ENCODE measurements at regions of chr19 and their contacts with region 1.

Region 1: DNA sequence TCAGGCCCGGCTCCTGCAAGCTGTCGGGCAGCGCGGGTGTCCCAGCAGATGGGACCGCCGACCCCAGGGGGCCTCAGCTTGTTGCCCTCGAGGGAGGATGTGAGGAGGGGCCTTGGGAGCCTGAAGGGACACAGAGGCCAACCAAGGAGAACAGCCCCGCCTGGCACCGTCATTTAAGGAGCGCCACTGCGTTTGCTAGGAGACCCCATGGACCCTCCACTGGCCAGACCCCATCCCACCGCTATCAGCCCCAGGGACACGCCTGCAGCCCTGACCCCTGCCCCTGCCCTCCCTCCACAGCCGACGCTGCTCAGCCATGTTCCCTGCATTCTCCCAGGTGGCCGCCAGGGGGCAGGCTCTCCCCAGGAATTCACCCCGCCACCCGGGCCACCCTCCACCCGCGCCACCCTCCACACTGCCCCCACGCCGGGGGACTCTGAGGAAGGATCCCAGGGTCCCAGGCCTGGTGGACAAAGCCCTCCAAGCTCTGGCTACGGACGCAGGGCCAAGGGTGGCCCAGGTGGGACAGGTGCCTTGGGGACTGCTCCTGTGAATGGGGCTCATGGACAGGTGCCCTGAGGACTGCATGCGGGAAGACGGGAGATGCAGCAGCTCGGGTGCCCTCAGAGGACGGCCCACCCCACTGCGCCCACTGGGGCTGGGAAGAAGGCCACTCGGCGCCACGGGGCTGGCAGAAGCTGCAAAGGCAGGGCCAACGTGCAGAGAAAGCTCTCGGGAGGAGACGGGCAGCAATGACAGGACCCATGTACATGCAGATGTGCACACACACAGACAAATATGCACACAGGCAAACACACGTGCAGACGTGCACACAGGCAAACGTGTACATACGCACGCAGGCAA is 34.4 kb downstream of the PIP5K1C start:
- DNase-seq: peak; percentile 58 to 85 (median 79)
- H3K4me3 ChIP-seq: no peak overlapping the region
- H3K27ac ChIP-seq: no peak overlapping the region
- H3K4me1 ChIP-seq: peaks cover 10% of the 10 kb centered on the region
- H3K27me3 ChIP-seq: no peaks in the 10 kb centered on the region
- CTCF ChIP-seq: peak; percentile 78 to 97 (median 95)
- EP300 ChIP-seq: no peak
- POLR2A ChIP-seq: no peak

Region 2: GRCh38 chr19:3557461-3558248 is 108.3 kb before region 1 on chr19 and contains the start of gene MFSD12:
- intact Hi-C with region 1: no loop called
- DNase-seq: peak; percentile 93 to 96 (median 94)
- H3K4me3 ChIP-seq: peak within 1 kb of the TSS; percentile 86
- H3K27ac ChIP-seq: peak within 1 kb of the TSS in 1 of 2 donors; percentile 45
- H3K4me1 ChIP-seq: peaks cover 10% of the 10 kb centered on the region
- H3K27me3 ChIP-seq: no peaks in the 10 kb centered on the region
- CTCF ChIP-seq: no peak
- EP300 ChIP-seq: no peak
- POLR2A ChIP-seq: peak; percentile 64
- total RNA-seq, gene MFSD12: 19.2 to 104 (median 36.9) TPM

Region 3: DNA sequence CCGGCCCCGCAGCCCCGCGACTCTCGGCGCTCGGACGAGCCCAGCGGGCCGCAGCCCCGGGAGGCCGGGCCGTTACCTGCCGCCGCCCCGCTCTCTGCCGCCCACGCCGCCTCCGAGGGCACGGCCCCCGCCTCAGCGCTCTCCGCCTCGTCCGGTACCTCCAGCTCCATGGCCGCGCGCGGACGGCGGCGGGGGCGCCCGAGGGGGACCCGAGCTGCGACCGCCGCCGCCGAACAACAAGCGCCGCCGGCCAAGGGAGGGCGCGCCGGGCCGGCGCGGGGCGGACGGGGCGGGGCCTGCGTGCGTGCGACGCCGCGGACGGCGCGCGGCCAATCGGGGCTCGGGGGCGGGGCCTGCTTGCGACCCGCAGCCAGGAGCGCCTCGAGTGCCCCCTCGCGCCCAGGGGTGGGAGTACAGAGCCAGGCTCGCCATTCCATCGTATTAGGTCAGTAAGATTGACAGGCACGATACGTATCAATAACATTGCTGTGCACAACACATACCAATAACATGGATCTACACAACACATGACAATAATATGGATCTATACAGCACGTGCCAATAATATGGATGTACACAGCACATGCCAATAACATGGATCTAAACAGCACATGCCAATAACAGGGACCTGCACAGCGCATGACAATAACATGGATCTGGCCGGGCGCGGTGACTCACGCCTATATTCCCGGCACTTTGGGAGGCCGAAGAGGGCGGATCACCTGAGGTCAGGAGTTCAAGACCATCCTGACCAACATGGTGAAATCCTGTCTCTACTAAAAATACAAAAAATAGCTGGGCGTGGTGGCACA is 34.5 kb after region 1 on chr19 and contains the start of gene PIP5K1C:
- intact Hi-C with region 1: loop called (anchors 1 to 5 kb)
- DNase-seq: peak; percentile 85 to 95 (median 93)
- H3K4me3 ChIP-seq: peak within 1 kb of the TSS; percentile 88
- H3K27ac ChIP-seq: peak within 1 kb of the TSS; percentile 26 to 79
- H3K4me1 ChIP-seq: peaks cover 12% of the 10 kb centered on the region
- H3K27me3 ChIP-seq: no peaks in the 10 kb centered on the region
- CTCF ChIP-seq: peak; percentile 72 to 94 (median 93)
- EP300 ChIP-seq: no peak
- POLR2A ChIP-seq: peak; percentile 40
- total RNA-seq, gene PIP5K1C: 11.3 to 41.7 (median 32.9) TPM

Region 4: GRCh38 chr19:3821857-3822364 is 156.0 kb after region 1 on chr19:
- intact Hi-C with region 1: no loop called
- DNase-seq: peak in 3 of 5 donors; percentile 39 to 58 (median 42)
- H3K4me3 ChIP-seq: no peak overlapping the region
- H3K27ac ChIP-seq: no peak overlapping the region
- H3K4me1 ChIP-seq: peaks cover 2% of the 10 kb centered on the region
- H3K27me3 ChIP-seq: no peaks in the 10 kb centered on the region
- CTCF ChIP-seq: peak; percentile 39 to 55 (median 43)
- EP300 ChIP-seq: no peak
- POLR2A ChIP-seq: no peak

Region 5: DNA sequence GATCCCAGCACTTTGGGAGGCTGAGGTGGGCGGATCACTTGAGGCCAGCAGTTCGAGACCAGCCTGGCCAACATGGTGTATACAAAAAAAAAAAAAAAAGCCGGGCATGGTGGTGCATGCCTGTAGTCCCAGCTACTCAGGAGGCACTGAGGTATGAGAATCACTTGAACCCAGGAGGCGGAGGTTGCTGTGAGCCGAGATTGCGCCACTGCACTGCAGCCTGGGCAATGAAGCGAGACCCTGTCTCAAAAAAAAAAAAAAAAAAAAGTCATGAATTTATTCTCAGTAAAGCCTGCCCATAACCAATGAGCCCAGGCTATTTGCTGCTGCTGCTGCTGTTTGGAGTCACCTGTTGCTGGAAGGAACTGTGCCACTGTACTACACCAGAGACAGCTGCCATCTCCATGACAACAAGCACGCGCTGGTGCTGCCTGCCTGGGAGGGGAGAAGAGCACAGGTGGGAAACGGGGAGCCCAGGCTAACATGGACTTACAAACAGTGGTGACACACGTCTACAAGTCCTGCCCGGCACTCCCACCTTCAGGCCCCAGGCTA is 191.6 kb after region 1 on chr19:
- intact Hi-C with region 1: no loop called
- DNase-seq: no peak
- H3K4me3 ChIP-seq: no peak overlapping the region
- H3K27ac ChIP-seq: no peak overlapping the region
- H3K4me1 ChIP-seq: no peaks in the 10 kb centered on the region
- H3K27me3 ChIP-seq: no peaks in the 10 kb centered on the region
- CTCF ChIP-seq: no peak
- EP300 ChIP-seq: no peak
- POLR2A ChIP-seq: no peak

Region 6: DNA sequence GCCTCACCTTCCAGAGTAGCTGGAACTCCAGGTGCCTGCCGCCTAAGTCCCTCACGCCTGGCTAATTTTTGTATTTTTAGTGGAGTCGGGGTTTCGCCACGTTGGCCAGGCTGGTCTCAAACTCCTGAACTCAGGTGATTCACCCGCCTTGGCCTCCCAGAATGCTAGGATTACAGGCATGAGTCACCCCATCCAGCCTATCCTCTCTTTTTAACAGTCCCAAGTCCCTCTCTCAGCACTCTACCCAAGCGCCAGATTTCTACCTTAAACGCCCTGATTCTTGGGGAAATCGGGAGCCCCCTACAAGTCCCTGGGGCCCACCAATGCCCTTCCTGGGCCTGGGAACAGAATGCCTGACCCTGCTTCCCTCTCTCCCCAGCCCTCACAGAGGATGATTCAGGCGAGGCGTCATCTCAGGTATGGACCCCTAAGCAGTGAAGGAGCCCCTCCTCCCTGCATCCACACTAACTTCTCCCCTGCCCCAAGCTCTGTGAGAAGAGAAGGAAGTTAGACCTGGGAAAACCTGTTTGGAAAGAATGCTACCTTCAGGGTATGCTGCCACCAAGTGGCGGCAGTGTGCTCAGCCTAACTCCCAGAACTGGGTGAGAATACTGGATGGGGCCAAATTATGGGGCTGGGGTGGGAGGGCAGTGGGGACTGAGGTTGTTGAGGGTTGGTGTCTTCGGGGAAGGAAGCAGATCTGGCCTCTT is 542.6 kb after region 1 on chr19:
- intact Hi-C with region 1: loop called in 1 of 4 experiments (anchors 10 kb)
- DNase-seq: no peak
- H3K4me3 ChIP-seq: no peak overlapping the region
- H3K27ac ChIP-seq: no peak overlapping the region
- H3K4me1 ChIP-seq: no peaks in the 10 kb centered on the region
- H3K27me3 ChIP-seq: no peaks in the 10 kb centered on the region
- CTCF ChIP-seq: no peak
- EP300 ChIP-seq: no peak
- POLR2A ChIP-seq: no peak